ENCODE measurements at regions of chr7 and their contacts with region 1.

Region 1: DNA sequence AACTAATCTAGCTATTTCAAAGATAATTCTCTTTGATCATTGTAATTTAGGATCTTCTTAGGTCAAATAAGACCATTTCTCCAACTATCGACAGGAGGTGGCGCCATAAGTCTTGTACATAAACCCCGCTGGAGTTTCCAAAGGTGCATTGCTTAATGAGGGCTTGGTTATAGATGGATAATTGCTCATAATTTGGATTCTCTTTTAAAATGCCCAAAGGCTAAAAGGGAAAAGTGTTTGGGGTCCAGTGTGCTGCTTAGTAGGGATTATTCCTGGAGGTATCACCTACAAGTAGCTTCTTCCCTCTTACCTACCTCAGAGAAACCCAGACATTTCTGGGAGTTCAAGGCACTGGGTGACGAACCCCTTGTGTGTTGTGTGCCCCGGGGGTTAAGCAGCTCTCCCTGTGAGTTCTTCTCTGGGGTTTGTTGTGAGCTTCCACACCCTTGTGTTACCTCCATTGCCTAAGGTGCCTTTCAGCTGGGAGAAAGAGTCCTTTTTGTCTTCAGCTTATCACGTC is 75.2 kb downstream of the PAXIP1 start:
- DNase-seq: peak; percentile 86
- H3K4me3 Mint-ChIP-seq: peak overlapping the region; percentile 97
- H3K27ac Mint-ChIP-seq: peak overlapping the region; percentile 93
- H3K4me1 Mint-ChIP-seq: peaks cover 5% of the 10 kb centered on the region
- H3K27me3 Mint-ChIP-seq: no peaks in the 10 kb centered on the region
- CTCF ChIP-seq: peak; percentile 74

Region 2: GRCh38 chr7:154947604-154948003 is 19.9 kb after region 1 on chr7:
- CTCF ChIA-PET with region 1: interaction called, 30 read pairs
- POLR2A ChIA-PET with region 1: interaction called, 6 read pairs
- intact Hi-C with region 1: no loop called
- DNase-seq: no peak
- H3K4me3 Mint-ChIP-seq: no peak overlapping the region
- H3K27ac Mint-ChIP-seq: no peak overlapping the region
- H3K4me1 Mint-ChIP-seq: no peaks in the 10 kb centered on the region
- H3K27me3 Mint-ChIP-seq: no peaks in the 10 kb centered on the region
- CTCF ChIP-seq: no peak

Region 3: GRCh38 chr7:154990964-154991540 is 63.4 kb after region 1 on chr7:
- CTCF ChIA-PET with region 1: interaction called, 11 read pairs
- POLR2A ChIA-PET with region 1: no interaction called
- intact Hi-C with region 1: no loop called
- DNase-seq: no peak
- H3K4me3 Mint-ChIP-seq: no peak overlapping the region
- H3K27ac Mint-ChIP-seq: peak overlapping the region; percentile 31
- H3K4me1 Mint-ChIP-seq: peaks cover 6% of the 10 kb centered on the region
- H3K27me3 Mint-ChIP-seq: no peaks in the 10 kb centered on the region
- CTCF ChIP-seq: no peak

Region 4: DNA sequence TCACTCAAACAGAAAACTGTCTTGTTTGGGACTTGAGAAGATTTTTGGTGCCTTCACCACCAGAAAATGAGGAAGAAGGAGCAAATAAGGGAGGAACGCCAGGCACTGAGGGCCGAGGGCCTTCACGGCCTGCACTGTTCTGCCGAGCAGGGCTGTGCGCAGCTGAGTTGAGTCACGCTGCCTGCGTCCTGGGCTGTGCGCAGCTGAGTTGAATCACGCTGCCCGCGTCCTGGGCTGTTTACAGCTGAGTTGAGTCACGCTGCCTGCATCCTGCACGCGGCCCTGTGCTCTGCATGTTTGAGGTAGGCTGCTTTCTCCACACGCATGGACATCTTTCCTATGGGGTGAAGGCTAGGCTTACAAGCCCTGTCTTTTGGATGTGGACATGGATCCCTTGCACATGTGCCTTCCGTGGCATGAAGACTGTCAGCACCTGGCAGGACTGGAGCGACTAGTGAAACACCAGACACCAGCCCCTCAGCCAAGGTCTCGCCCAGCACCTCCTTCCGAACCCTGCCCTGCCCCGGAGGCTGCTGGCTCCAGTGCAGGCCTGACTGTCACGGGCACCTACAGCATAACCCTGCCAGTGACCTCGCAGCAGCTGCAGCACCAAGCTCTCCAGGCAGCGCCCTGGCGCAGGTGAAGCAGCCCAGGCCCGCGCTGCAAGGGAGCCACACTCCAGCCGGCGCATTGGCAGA is 239.1 kb after region 1 on chr7:
- CTCF ChIA-PET with region 1: interaction called, 6 read pairs
- POLR2A ChIA-PET with region 1: interaction called, 10 read pairs
- intact Hi-C with region 1: loop called (anchors 5 kb)
- DNase-seq: peak; percentile 89
- H3K4me3 Mint-ChIP-seq: no peak overlapping the region
- H3K27ac Mint-ChIP-seq: peak overlapping the region; percentile 91
- H3K4me1 Mint-ChIP-seq: peaks cover 16% of the 10 kb centered on the region
- H3K27me3 Mint-ChIP-seq: peaks cover 6% of the 10 kb centered on the region
- CTCF ChIP-seq: no peak

Region 5: GRCh38 chr7:155298834-155299534 is 371.3 kb after region 1 on chr7:
- CTCF ChIA-PET with region 1: no interaction called
- POLR2A ChIA-PET with region 1: interaction called, 13 read pairs
- intact Hi-C with region 1: loop called (anchors 5 kb)
- DNase-seq: peak; percentile 97
- H3K4me3 Mint-ChIP-seq: peak overlapping the region; percentile 82
- H3K27ac Mint-ChIP-seq: peak overlapping the region; percentile 52
- H3K4me1 Mint-ChIP-seq: peaks cover 22% of the 10 kb centered on the region
- H3K27me3 Mint-ChIP-seq: no peaks in the 10 kb centered on the region
- CTCF ChIP-seq: no peak

Region 6: GRCh38 chr7:155769701-155770100 is 842.0 kb after region 1 on chr7:
- CTCF ChIA-PET with region 1: interaction called, 16 read pairs
- POLR2A ChIA-PET with region 1: no interaction called
- intact Hi-C with region 1: loop called (anchors 5 kb)
- DNase-seq: no peak
- H3K4me3 Mint-ChIP-seq: no peak overlapping the region
- H3K27ac Mint-ChIP-seq: no peak overlapping the region
- H3K4me1 Mint-ChIP-seq: no peaks in the 10 kb centered on the region
- H3K27me3 Mint-ChIP-seq: no peaks in the 10 kb centered on the region
- CTCF ChIP-seq: no peak

Measured in MCF 10A (cell line).